ENCODE measurements at regions of chr6 and their contacts with region 1.

Region 1: GRCh38 chr6:12348530-12349511 is 58.7 kb downstream of the EDN1 start:
- DNase-seq: no peak
- ATAC-seq: no peak
- H3K4me3 ChIP-seq: no peak overlapping the region
- H3K27ac ChIP-seq: peak overlapping the region; percentile 82 to 89
- H3K4me1 ChIP-seq: peaks cover 6 to 7% of the 10 kb centered on the region in 2 donors
- H3K27me3 ChIP-seq: no peaks in the 10 kb centered on the region

Region 2: DNA sequence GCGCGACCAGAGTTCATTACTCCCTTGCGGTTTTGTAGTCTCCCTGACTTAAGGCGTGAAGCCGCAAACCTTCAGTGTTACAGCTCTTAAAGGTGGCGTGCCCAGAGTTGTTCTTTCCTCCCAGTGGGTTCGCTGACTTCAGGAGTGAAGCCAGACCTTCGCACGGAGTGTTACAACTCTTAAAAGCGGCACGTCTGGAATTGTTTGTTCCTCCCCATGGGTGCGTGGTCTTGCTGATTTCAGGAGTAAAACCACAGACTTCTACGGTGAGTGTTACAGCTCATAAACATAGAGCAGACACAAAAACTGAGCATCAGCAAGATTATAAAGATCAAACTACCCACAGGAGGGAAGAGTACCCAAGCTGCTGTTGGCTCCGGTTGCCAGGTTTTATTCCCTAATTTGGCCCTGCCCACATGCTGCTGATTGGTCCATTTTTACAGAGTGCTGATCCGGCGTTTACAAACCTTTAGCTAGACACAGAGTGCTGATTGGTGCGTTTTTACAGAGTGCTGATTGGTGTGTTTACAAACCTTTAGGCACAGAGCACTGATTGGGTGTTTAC is 1615.6 kb before region 1 on chr6:
- intact Hi-C with region 1: no loop called
- DNase-seq: no peak
- ATAC-seq: no peak
- H3K4me3 ChIP-seq: no peak overlapping the region
- H3K27ac ChIP-seq: no peak overlapping the region
- H3K4me1 ChIP-seq: peaks cover 0 to 3% of the 10 kb centered on the region in 2 donors
- H3K27me3 ChIP-seq: no peaks in the 10 kb centered on the region

Region 3: DNA sequence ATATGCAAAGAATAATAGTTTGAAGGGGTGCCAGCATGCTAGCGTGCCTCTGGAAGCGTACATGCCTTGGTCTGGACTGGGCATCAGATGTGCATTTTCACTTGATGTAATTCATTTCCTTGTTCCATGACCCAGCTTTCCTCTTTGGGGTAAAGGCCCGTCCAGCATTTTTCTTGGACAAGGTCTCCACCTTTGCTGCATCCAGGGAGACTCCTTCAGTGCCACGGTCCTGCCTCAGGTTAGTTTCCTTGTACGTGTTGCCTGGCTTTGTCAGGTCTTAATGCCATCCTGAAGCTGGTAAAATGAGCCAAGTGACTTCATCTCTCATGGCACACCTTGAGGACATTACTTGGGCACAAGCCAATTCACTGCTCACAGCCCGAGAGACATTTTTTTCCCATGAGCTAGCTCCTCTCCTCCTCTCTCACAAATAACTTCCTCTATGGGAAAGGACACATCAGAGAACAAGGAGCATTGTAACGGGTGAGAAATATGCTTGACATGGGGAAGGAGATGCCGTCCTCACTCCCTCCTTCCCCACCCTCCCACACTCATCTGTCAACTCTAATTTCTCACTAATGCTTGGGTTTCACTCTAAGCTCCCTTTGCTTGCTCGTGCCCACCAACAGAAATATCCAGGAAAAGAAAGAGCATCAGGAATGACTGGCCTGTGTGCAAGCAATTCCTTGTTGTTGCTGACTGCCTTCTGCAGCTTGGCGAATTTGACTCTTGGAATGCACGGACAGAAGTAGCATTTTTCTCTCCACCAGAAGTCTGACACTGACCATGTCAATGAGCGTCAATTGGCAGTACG is 34.6 kb before region 1 on chr6:
- intact Hi-C with region 1: loop called in 1 of 2 experiments (anchors 5 kb)
- DNase-seq: no peak
- ATAC-seq: peak; percentile 52
- H3K4me3 ChIP-seq: peak overlapping the region in 1 of 2 donors; percentile 11
- H3K27ac ChIP-seq: peak overlapping the region; percentile 57 to 94
- H3K4me1 ChIP-seq: peaks cover 0 to 3% of the 10 kb centered on the region in 2 donors
- H3K27me3 ChIP-seq: no peaks in the 10 kb centered on the region

Region 4: GRCh38 chr6:12383448-12383847 is 34.6 kb after region 1 on chr6:
- intact Hi-C with region 1: loop called (anchors 5 kb)
- DNase-seq: no peak
- ATAC-seq: no peak
- H3K4me3 ChIP-seq: no peak overlapping the region
- H3K27ac ChIP-seq: peak overlapping the region in 1 of 2 donors; percentile 25
- H3K4me1 ChIP-seq: peaks cover 8 to 11% of the 10 kb centered on the region in 2 donors
- H3K27me3 ChIP-seq: no peaks in the 10 kb centered on the region

Region 5: GRCh38 chr6:12420626-12421025 is 71.8 kb after region 1 on chr6:
- intact Hi-C with region 1: loop called in 1 of 2 experiments (anchors 5 kb)
- DNase-seq: no peak
- ATAC-seq: no peak
- H3K4me3 ChIP-seq: no peak overlapping the region
- H3K27ac ChIP-seq: no peak overlapping the region
- H3K4me1 ChIP-seq: peaks cover 2 to 4% of the 10 kb centered on the region in 2 donors
- H3K27me3 ChIP-seq: no peaks in the 10 kb centered on the region

Region 6: DNA sequence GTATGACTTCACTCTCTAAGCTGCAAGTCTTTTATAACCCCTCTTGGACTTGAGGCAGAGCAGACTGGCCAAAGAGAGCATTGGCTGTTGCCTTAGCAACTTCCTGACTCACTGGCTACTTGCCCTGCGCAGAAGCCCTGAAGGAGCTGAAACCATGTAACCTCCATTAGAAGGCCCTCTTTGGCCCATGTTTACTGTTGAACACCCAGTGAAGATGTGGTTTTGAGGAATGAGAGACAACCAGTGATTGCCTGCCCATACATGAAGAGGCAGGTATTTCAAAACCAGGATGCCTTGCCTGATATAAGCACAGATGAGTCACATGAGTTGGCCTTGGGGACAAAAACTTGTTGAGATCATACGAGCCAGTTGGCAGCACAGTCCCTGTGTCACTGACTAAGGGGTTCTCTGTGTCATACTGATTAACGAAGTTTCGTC is 123.8 kb after region 1 on chr6:
- intact Hi-C with region 1: loop called in 1 of 2 experiments (anchors 5 kb)
- DNase-seq: peak; percentile 81 to 87
- ATAC-seq: peak; percentile 92
- H3K4me3 ChIP-seq: no peak overlapping the region
- H3K27ac ChIP-seq: peak overlapping the region; percentile 4 to 99
- H3K4me1 ChIP-seq: peaks cover 9 to 11% of the 10 kb centered on the region in 2 donors
- H3K27me3 ChIP-seq: no peaks in the 10 kb centered on the region

Measured in aorta (tissue), 5 donors.